ENCODE measurements at regions of chr3 and their contacts with region 1.

Region 1: GRCh38 chr3:186540221-186540834 is 3.9 kb downstream of the CRYGS start:
- DNase-seq: peak in 9 of 10 donors; percentile 47 to 93 (median 80)

Region 2: DNA sequence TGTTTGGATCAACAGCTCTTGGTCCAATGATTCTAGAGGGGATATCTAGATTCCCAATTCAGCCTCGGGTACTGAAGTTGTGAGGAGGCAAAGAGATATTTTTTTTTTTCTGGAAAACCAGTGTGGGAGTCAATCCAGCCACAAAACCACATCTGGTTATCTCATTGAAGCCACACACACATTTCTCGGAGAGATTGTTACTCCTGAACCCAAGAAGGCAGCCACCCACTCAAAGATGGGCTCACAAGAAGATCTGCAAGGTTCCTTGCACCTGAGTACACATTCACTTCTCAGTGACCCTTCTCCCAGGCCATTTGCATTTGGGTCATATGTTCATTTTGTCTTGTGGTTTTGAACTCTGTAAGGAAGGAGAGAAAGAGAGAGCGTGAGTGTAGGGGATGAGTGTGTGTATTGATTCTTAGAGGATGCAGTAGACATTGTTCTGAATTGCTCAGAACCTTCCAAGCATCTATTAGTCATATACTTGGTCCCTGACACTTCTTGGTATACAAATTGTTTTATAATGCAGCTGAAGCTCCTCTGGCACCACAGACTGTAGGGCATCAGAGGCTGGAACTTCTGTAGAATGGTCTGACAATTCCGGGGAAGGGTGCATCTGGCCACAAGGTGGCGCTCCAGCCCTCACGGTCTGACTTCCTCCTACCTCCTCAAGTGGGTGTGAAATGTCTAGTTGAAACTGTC is 563.2 kb before region 1 on chr3:
- intact Hi-C with region 1: loop called (anchors 1 kb)
- DNase-seq: peak; percentile 65 to 97 (median 90)

Region 3: DNA sequence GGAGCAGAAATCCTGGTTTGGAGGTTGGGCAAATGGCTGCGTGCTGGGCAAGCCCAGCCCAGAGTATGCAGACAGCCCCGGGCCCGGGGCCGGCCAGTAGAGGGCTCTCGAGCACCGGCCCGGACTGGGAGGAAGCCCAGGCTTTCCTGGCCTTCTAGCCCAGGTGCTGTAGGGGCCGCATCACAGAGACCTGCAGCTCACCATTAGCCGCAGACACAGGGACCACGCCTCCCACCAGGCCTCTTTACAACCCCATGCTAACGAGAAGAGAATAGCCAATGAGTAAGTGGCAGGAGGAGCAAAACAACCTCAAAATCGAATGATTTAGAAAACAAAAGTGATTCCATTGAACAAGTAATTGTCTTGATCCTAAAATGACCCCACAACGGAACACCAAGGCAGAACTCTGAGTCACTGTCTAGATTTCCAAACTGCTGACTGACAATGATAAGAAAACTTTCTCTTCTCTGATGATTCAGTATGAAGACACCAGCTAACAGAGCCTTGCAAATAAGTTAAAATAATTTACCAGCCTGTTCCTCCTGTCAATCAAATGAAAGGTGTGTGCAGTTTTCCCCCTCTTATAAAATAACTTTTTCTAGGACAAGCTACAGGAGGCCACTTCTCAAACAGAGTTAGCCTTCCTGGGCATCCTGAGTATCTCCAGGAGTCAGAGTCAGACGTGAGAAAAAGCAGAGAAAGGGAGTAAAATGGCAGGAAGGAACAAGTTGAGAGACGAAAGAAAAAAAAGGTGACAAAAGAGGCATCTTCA is 280.5 kb before region 1 on chr3:
- intact Hi-C with region 1: loop called (anchors 2 kb)
- DNase-seq: peak in 8 of 10 donors; percentile 40 to 93 (median 68)